ENCODE measurements at regions of chr19 and their contacts with region 1.

Region 1: DNA sequence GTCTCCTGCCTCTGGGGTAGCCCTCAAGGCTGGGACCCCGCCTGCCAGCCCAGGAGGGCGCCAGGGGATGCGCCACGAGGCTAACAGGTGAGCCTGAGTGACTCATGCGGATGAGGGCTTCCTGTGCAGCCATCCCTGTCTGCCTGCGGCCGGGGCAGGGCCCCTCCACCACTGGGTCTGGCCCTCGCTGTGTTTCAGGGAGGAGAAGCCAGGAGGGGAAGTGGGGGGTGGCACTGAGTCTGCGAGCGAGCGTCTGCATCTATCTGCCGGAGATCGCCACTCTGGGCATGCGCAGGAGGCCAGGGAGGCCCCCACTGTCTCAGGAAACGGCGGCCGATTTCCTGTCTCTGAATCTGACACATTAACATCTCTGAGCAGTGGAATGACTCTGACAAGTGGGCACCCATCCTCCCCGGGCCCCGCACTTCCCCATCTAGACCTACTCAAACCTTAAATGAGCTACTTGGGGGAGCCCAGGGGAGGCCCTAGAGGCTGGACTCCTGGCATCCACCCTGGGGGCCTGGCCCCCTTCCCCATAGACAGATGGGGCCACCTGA is 19.7 kb downstream of the RFX1 start:
- DNase-seq: peak; percentile 98
- ATAC-seq: peak; percentile 82
- H3K4me3 ChIP-seq: peak overlapping the region; percentile 9 to 54 (median 35)
- H3K4me3 Mint-ChIP-seq: peak overlapping the region; percentile 71
- H3K27ac ChIP-seq: peak overlapping the region; percentile 95 to 99
- H3K27ac Mint-ChIP-seq: peak overlapping the region; percentile 99
- H3K4me1 ChIP-seq: peaks cover 59 to 69% of the 10 kb centered on the region in 2 donors
- H3K4me1 Mint-ChIP-seq: peaks cover 67% of the 10 kb centered on the region
- H3K27me3 ChIP-seq: no peaks in the 10 kb centered on the region
- H3K27me3 Mint-ChIP-seq: no peaks in the 10 kb centered on the region
- CTCF ChIP-seq: no peak

Region 2: GRCh38 chr19:13839130-13839937 is 147.1 kb before region 1 on chr19:
- CTCF ChIA-PET with region 1: no interaction called
- POLR2A ChIA-PET with region 1: no interaction called
- intact Hi-C with region 1: loop called (anchors 1 kb)
- DNase-seq: peak; percentile 82
- ATAC-seq: peak; percentile 44
- H3K4me3 ChIP-seq: peak overlapping the region; percentile 1 to 75 (median 62)
- H3K4me3 Mint-ChIP-seq: peak overlapping the region; percentile 88
- H3K27ac ChIP-seq: peak overlapping the region; percentile 93 to 94
- H3K27ac Mint-ChIP-seq: peak overlapping the region; percentile 95
- H3K4me1 ChIP-seq: peaks cover 76 to 83% of the 10 kb centered on the region in 2 donors
- H3K4me1 Mint-ChIP-seq: peaks cover 66% of the 10 kb centered on the region
- H3K27me3 ChIP-seq: no peaks in the 10 kb centered on the region
- H3K27me3 Mint-ChIP-seq: no peaks in the 10 kb centered on the region
- CTCF ChIP-seq: no peak

Region 3: GRCh38 chr19:13952154-13953035 is 34.0 kb before region 1 on chr19 and contains the start of gene DCAF15:
- CTCF ChIA-PET with region 1: interaction called, 10 read pairs
- POLR2A ChIA-PET with region 1: interaction called, 12 read pairs
- intact Hi-C with region 1: loop called (anchors 1 kb)
- DNase-seq: peak; percentile 100
- ATAC-seq: peak; percentile 95
- H3K4me3 ChIP-seq: peak within 1 kb of the TSS; percentile 55 to 98 (median 76)
- H3K4me3 Mint-ChIP-seq: peak within 1 kb of the TSS; percentile 96
- H3K27ac ChIP-seq: peak within 1 kb of the TSS; percentile 34 to 85
- H3K27ac Mint-ChIP-seq: peak within 1 kb of the TSS; percentile 96
- H3K4me1 ChIP-seq: peaks cover 15 to 18% of the 10 kb centered on the region in 2 donors
- H3K4me1 Mint-ChIP-seq: peaks cover 21% of the 10 kb centered on the region
- H3K27me3 ChIP-seq: no peaks in the 10 kb centered on the region
- H3K27me3 Mint-ChIP-seq: no peaks in the 10 kb centered on the region
- CTCF ChIP-seq: no peak
- total RNA-seq, gene DCAF15: 115 and 116 TPM in 2 replicates

Region 4: GRCh38 chr19:13959962-13960862 is 26.2 kb before region 1 on chr19:
- CTCF ChIA-PET with region 1: interaction called, 3 read pairs
- POLR2A ChIA-PET with region 1: interaction called, 3 read pairs
- intact Hi-C with region 1: loop called (anchors 2 kb)
- DNase-seq: peak; percentile 45
- ATAC-seq: peak; percentile 70
- H3K4me3 ChIP-seq: no peak overlapping the region
- H3K4me3 Mint-ChIP-seq: no peak overlapping the region
- H3K27ac ChIP-seq: no peak overlapping the region
- H3K27ac Mint-ChIP-seq: peak overlapping the region; percentile 41
- H3K4me1 ChIP-seq: no peaks in the 10 kb centered on the region
- H3K4me1 Mint-ChIP-seq: no peaks in the 10 kb centered on the region
- H3K27me3 ChIP-seq: no peaks in the 10 kb centered on the region
- H3K27me3 Mint-ChIP-seq: no peaks in the 10 kb centered on the region
- CTCF ChIP-seq: peak; percentile 28

Measured in B cell (primary cell).